Right ventricle myocardium superior (tissue), 1 donor: ENCODE measurements at regions of chr16 and their contacts with region 1.

Region 1: GRCh38 chr16:785563-786535 is 2.3 kb downstream of the RPUSD1 start:
- DNase-seq: peak; percentile 84
- ATAC-seq: peak; percentile 45

Region 2: DNA sequence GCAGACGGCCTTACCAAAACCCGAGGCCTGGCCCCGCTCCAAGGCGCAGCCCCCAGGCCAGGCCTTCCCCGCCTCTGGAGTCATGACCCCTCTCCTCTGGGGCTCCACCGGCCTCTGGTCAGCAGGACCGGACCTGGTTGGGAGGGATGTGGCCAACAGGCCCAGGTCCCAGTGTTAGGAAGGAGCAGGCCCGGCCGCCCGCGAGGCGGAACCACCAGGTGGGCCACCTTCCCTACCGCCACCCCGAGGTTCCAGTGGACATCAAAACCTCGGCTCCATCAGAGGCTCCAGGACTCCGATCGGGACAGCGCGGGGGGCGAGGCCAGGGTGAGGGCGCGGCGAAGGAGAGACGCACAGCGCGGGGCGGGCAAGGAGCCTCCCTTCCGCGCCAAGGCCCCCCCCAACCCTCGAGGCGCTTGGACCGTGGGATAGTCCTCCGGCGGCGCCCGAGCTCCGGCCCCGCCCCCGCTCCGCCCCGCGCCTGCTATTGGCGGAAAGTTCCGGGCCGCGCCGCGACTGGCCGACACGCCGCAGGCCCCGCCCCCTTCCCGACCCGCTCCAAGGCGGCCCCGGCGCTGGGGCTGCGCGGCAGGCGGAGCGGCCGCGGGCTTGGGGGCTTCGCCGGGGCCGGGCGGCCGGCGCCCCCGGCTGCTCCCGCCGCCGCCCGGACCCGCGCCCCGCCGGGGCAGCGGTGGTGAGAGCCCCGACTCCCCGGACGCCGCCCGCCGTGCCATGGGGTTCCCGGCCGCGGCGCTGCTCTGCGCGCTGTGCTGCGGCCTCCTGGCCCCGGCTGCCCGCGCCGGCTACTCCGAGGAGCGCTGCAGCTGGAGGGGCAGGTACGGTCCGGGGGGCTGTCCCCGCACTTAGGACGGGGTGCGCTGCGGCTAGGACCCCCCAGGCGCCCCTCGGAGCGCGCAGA is 71.0 kb before region 1 on chr16 and contains the start of gene METRN:
- intact Hi-C with region 1: loop called (anchors 2 kb)
- DNase-seq: peak; percentile 96
- ATAC-seq: peak; percentile 94
- total RNA-seq, gene METRN: 59.6 TPM

Region 3: DNA sequence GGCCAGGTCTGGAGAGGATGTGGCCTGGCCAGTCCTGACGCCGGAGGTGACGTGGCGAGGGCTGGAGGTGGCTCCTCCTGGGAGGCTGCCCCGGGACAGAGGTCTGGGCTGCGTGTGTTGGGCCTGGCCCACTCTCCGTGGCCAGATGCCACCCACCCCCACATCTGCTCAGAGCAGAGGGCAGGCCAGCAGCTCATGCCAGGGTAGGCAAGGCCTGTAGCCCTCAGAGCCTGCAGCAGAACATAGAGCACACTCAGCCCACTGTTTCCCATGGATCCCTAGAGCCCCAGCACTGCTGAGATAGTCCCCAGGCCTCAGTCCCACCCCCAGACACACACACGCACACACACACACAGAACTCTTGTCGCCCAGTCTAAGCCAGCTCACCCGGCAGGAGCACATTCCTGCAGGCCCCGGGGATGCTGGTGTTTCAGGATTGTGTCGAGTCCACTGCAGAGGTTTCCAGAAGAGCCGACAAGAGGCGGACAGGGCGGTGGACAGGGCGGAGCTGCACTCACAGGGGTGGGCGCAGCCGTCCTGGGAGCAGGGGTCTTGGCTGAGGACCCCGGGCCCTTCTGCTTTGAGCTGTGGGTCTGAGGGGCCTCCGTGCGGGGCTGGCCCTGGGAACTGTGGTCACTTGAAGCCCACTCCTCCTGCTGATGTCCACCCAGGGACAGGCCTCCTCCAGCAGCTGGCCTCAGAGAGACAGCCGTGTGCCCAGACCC is 229.1 kb after region 1 on chr16:
- intact Hi-C with region 1: no loop called
- DNase-seq: peak; percentile 61
- ATAC-seq: peak; percentile 42